Mammary epithelial cell (primary cell): ENCODE measurements at regions of chr17 and their contacts with region 1.

Region 1: GRCh38 chr17:59565171-59565969 is at the start of gene DHX40:
- DNase-seq: peak; percentile 83
- H3K4me3 ChIP-seq: peak within 1 kb of the TSS; percentile 93 to 98 (median 95)
- H3K27ac ChIP-seq: peak within 1 kb of the TSS; percentile 87
- H3K4me1 ChIP-seq: peaks cover 9% of the 10 kb centered on the region
- H3K27me3 ChIP-seq: no peaks in the 10 kb centered on the region
- CTCF ChIP-seq: no peak
- total RNA-seq, gene DHX40: 22.5 to 42.7 TPM

Region 2: DNA sequence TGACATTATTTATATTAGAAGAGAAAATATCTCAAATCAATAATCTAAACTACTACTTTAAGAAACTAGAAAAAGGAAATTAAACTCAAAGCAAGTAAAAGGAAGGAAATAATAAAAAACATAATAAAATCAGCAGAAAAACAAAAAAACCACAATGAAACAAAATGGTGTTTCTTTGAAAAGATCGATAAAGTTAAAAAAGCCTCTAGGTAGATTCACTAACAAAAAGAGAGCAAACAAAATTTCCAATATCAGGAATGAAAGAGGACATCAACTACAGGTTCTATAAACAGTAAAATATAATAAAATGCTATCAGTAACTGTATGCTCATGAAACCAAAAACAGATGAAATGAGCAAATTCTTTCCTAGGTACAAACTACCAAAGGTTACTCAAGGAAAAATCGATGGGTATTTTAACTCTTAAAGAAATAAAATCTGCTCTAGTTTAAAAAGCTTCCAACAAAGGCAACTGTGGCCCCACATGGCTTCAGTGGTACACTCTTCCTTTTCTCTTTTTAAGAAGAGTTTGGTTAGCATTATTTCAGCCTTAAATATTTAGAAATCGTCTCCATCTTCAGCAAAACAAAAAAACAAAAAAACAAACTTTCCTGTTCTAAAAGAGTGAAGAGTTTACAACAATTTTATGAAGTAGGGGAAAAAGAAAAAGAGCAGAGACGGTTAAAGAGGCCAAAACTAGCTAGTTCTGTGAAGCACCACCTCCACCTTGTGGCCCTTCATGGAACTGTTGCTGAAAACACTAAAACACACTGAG is 560.8 kb before region 1 on chr17:
- CTCF ChIA-PET with region 1: no interaction called
- dilution Hi-C with region 1: no loop called
- in situ Hi-C with region 1: no loop called
- intact Hi-C with region 1: no loop called
- DNase-seq: peak; percentile 29
- H3K4me3 ChIP-seq: no peak overlapping the region
- H3K27ac ChIP-seq: no peak overlapping the region
- H3K4me1 ChIP-seq: no peaks in the 10 kb centered on the region
- H3K27me3 ChIP-seq: no peaks in the 10 kb centered on the region
- CTCF ChIP-seq: peak; percentile 90 to 92

Region 3: DNA sequence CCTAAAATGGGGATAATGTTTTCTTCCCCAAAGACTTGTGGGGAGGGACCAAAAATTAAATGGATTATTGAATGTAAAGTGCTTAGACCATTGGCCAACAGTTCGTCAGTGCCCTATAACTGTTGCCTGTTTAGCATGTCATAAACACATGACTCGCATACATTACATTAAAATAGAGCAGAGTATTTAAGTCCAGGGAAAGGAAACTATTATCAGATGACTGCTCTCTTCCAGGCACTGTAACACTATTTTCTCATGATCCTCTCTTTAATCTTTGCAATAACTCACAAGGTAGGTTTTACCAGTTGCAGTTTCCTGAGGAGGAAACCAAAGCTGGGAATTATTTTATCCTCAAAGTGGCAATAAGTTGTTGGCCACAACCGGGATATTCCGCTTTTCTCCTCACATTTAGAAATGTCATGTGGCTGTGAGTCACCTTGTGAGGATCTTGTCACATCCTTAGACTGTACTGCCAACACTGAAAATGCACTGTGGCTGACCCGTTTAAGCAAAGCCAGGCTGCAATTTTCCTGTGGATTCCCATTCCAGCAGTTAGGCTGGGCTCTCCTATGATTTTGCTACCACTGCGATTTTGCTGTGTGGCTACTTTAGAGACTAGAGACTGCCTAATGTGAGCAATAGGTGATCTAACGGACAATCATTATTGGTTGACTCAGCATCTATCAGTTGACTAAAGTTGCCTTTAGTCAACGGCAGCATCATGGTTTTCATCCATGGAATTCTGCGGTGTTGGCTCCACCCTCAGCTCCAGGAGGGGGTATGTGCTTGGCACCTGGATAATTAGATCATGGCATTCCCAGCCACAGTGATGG is 58.3 kb before region 1 on chr17:
- CTCF ChIA-PET with region 1: no interaction called
- dilution Hi-C with region 1: no loop called
- in situ Hi-C with region 1: no loop called
- intact Hi-C with region 1: no loop called
- DNase-seq: no peak
- H3K4me3 ChIP-seq: no peak overlapping the region
- H3K27ac ChIP-seq: no peak overlapping the region
- H3K4me1 ChIP-seq: no peaks in the 10 kb centered on the region
- H3K27me3 ChIP-seq: no peaks in the 10 kb centered on the region
- CTCF ChIP-seq: no peak

Region 4: DNA sequence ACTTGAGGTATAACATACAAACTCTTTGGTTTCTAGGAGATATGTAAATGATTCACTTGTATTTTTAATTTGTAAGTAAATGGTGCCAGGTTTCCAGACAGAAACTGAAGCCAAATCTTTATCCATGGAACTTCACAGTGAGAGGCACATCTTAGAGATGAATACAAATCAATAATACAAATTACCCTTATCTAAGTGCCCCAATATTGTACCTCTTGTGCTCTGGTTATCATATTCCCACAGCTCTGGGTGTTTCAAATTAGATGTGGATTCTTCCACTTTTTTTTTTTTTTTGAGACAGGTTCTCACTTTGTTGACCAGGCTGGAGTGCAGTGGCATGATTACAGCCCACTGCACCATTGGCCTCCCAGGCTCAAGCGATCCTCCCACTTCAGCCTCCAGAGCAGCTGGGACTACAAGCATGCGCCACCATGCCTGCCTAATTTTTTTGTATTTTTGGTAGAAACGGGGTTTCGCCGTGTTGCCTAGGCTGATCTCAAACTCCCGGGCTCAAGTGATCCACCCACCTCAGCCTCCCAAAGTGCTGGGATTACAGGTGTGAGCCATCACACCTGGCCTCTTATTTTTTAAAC is 37.9 kb before region 1 on chr17:
- CTCF ChIA-PET with region 1: no interaction called
- dilution Hi-C with region 1: no loop called
- in situ Hi-C with region 1: no loop called
- intact Hi-C with region 1: loop called (anchors 5 kb)
- DNase-seq: no peak
- H3K4me3 ChIP-seq: no peak overlapping the region
- H3K27ac ChIP-seq: no peak overlapping the region
- H3K4me1 ChIP-seq: no peaks in the 10 kb centered on the region
- H3K27me3 ChIP-seq: no peaks in the 10 kb centered on the region
- CTCF ChIP-seq: no peak